ENCODE measurements at regions of chr19 and their contacts with region 1.

Region 1: DNA sequence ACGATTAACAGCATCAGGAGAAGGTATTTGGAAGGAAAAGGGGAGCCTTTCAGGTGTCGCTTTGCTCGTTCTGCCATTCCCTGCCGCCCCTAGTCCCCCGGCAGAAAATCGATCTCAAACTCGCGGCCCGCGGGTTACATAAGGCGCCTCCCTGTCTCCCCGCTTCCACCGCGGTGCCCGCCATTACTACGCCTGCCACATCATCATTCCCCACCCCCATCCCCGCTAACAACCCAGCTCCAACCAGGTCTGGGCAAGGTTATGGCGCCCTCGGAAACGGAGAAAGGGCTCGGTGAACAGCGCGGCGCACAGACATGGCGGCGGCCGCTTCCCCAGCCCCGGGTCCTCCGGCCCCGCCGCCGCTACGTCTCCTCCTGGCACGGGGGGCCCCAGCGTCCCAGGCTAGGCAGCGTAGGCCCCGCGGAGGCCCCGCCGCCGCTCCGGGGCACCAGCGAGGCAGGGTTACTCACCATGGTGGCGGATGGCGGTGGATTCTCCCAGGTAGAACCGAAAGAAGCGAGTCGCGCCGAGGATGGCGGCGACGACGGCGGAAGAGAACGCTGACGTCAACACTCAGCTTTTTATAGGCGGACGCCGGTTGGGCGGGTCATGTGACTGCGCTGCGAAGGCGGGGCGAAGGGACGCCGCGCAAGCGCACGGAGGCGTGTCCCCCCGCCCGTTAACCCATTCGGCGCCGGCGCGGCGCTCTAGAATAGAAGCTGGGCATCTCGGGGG is at the start of gene EEF2:
- DNase-seq: peak; percentile 88 to 95 (median 92)
- H3K4me3 ChIP-seq: peak within 1 kb of the TSS; percentile 81 to 100 (median 99)
- H3K27ac ChIP-seq: peak within 1 kb of the TSS; percentile 91 to 96
- H3K4me1 ChIP-seq: peaks cover 15 to 38% (median 33%) of the 10 kb centered on the region in 4 experiments
- H3K27me3 ChIP-seq: no peaks in the 10 kb centered on the region

Region 2: GRCh38 chr19:3914199-3914598 is 70.9 kb before region 1 on chr19:
- CTCF ChIA-PET with region 1: no interaction called
- POLR2A ChIA-PET with region 1: no interaction called
- DNase-seq: no peak
- H3K4me3 ChIP-seq: no peak overlapping the region
- H3K27ac ChIP-seq: no peak overlapping the region
- H3K4me1 ChIP-seq: no peaks in the 10 kb centered on the region
- H3K27me3 ChIP-seq: no peaks in the 10 kb centered on the region

Region 3: DNA sequence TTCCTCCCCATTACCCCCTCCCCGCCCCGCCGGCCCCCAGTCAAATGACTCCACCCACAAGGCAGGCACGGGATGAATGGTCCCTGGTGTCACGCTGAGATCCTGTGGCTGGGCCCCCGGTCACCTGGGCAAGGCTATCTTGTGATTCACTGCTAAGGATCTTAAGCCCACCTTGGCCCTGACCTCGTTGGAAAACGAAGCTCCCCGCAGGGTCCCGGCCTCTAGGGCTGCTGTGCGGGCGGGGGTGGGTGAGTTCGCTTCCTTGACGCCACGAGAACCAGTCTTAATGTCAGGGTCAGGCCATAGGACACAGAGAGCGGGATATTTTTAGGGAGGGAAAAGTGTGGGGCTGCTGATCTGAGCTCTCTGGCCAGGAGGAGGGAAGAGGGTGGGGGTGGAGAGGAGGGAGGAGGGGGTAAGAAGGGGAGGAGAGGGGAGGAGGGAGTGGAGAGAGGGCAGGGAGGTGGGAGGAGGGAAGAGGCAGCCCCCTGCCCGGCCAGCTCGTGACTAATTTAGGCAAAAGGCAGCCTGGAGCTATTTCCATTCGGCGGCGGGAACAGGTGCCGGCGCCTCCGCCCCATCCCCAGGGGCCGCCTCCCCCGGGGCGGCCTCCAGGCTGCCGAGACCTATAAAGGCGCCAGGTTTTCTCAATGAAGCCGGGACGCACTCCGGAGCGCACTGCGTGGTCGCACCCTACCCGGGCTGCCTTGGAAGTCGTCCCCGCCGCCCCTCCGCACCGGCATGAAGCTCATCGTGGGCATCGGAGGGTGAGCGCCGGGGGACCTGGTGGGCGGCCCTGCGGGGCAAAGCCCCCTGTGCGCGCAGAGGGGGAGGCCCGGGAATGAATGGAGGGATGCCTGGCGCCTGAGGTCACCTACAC is 51.9 kb before region 1 on chr19 and contains the start of gene NMRK2:
- CTCF ChIA-PET with region 1: no interaction called
- POLR2A ChIA-PET with region 1: no interaction called
- DNase-seq: peak in 2 of 3 donors; percentile 27 to 48
- H3K4me3 ChIP-seq: peak within 1 kb of the TSS in 1 of 7 experiments; percentile 7
- H3K27ac ChIP-seq: no peak within 1 kb of the TSS
- H3K4me1 ChIP-seq: peaks cover 0 to 7% (median 2%) of the 10 kb centered on the region in 4 experiments
- H3K27me3 ChIP-seq: peaks cover 0 to 44% (median 5%) of the 10 kb centered on the region in 5 experiments

Region 4: DNA sequence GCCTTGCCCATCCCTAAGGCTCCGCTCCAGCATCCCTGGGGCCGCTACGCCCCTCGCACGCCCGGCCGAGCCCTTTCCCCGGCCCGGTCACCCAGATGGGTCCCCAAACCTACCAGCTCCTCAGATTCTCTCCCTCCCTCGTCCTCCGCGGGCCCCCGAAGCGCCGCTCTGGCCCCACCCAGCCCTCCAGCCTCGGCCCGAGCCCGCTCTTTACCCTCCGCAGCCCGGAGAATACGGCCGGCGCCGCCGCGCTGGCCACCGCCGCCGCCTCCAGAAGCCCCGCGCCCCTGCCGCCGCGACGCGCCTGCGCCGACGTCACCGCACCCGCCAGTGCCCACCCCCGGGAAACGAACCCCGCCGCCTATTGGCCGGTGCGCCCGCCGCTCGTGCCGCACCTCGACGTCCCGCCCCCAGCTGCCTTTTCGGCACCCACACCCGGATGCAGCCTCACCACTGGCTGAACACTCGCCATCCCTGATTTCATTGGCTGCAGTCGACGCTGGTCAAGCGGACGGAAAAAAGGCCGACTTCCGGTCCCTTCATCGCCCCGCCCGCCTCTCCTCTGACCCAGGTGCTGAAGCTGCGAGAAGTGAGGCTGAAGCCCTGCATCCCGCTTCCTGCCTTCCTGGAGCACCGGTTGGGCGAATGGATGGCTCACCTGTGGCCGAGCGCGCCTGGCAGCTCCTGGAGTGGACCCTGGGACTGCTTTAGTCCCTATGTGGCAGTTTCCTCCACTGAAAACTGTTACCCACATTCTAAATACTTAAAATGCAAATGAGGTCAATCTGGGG is 14.1 kb before region 1 on chr19 and contains the start of gene DAPK3:
- CTCF ChIA-PET with region 1: interaction called, 7 read pairs
- POLR2A ChIA-PET with region 1: interaction called, 11 read pairs
- DNase-seq: peak; percentile 84 to 91 (median 91)
- H3K4me3 ChIP-seq: peak within 1 kb of the TSS; percentile 70 to 93 (median 78)
- H3K27ac ChIP-seq: peak within 1 kb of the TSS; percentile 40 to 84
- H3K4me1 ChIP-seq: peaks cover 0 to 24% (median 22%) of the 10 kb centered on the region in 4 experiments
- H3K27me3 ChIP-seq: no peaks in the 10 kb centered on the region

Region 5: GRCh38 chr19:4007021-4007835 is 22.2 kb after region 1 on chr19 and contains the start of gene PIAS4:
- CTCF ChIA-PET with region 1: interaction called, 12 read pairs
- POLR2A ChIA-PET with region 1: interaction called, 8 read pairs
- DNase-seq: peak; percentile 93 to 97 (median 97)
- H3K4me3 ChIP-seq: peak within 1 kb of the TSS; percentile 82 to 96 (median 89)
- H3K27ac ChIP-seq: peak within 1 kb of the TSS; percentile 15 to 82
- H3K4me1 ChIP-seq: peaks cover 9 to 25% (median 17%) of the 10 kb centered on the region in 4 experiments
- H3K27me3 ChIP-seq: no peaks in the 10 kb centered on the region

Region 6: GRCh38 chr19:4164262-4164661 is 179.2 kb after region 1 on chr19:
- CTCF ChIA-PET with region 1: no interaction called
- POLR2A ChIA-PET with region 1: no interaction called
- DNase-seq: no peak
- H3K4me3 ChIP-seq: no peak overlapping the region
- H3K27ac ChIP-seq: no peak overlapping the region
- H3K4me1 ChIP-seq: no peaks in the 10 kb centered on the region
- H3K27me3 ChIP-seq: peaks cover 0 to 2% (median 0%) of the 10 kb centered on the region in 5 experiments